ENCODE measurements at regions of chr3 and their contacts with region 1.

Region 1: DNA sequence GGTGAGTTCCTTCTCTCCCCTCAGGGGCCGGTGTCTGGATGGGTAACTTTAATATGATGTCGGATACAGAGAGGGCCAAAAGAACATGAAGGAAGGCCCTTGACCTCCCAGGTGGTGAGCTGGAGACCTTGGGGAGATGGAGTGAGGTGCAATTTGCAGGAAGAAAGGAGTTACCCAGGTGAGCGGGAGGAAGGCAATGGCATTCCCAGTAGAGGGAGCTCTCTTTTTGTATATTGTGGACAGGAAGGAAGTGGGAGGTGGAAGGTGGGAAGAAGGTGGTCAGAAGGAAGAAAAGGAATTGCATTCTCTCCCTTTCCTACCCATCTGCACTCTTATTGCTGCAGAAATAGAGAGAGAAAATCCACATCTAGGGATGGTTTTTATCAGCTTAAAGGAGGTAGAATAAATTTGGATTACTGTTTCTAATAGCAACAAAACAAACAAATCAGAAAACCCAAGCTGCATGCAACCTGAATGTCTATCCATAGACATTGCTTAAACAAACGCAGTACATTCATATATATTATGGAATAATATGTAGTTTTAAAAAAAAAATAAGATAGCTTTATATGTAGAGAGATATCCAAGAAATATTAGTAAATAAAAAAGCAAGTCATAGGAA is 169.0 kb upstream of the TSC22D2 start:
- DNase-seq: no peak
- ATAC-seq: peak; percentile 61 to 77 (median 65)
- H3K4me3 ChIP-seq: no peak overlapping the region
- H3K27ac ChIP-seq: no peak overlapping the region
- H3K4me1 ChIP-seq: peaks cover 0 to 9% (median 0%) of the 10 kb centered on the region in 4 donors
- H3K27me3 ChIP-seq: no peaks in the 10 kb centered on the region
- CTCF ChIP-seq: peak; percentile 46 to 62 (median 54)
- POLR2A ChIP-seq: no peak

Region 2: DNA sequence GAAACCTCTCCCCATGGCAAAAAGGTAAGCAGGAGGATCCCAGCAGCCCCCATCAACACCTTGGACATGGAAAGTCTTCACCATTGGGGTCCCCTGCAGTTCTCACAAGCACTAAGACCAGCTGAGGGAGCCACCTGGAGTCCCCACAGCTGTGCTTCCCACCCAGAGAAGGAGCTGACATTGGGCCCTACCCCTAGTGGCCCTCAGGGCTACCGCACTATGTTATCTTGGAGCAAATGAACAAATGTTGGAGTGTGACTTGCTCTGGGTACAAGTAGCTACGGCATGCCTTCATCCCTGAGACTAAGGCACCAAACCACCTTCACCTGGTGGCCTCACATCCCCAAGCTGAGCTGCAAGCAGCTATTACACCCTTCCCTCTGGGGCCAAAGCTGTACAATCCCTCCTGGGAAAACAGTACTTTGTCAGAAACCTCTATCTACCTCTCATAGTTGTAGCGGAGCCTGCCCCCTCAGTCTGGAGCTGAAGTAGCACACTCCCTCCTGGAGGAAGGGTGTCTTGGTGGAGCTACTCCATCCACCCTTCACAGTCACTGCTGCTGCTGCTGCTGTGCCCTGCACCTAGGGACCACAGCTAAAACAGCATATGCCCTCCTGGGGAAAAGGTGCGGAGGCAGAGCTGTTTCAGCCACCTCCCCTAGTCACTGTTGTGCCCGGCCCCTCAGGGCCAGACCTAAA is 264.4 kb after region 1 on chr3:
- intact Hi-C with region 1: loop called in 1 of 2 experiments (anchors 10 kb)
- DNase-seq: no peak
- ATAC-seq: peak in 1 of 4 donors; percentile 22
- H3K4me3 ChIP-seq: no peak overlapping the region
- H3K27ac ChIP-seq: no peak overlapping the region
- H3K4me1 ChIP-seq: no peaks in the 10 kb centered on the region
- H3K27me3 ChIP-seq: no peaks in the 10 kb centered on the region
- CTCF ChIP-seq: no peak
- POLR2A ChIP-seq: no peak